ENCODE measurements at regions of chr3 and their contacts with region 1.

Region 1: DNA sequence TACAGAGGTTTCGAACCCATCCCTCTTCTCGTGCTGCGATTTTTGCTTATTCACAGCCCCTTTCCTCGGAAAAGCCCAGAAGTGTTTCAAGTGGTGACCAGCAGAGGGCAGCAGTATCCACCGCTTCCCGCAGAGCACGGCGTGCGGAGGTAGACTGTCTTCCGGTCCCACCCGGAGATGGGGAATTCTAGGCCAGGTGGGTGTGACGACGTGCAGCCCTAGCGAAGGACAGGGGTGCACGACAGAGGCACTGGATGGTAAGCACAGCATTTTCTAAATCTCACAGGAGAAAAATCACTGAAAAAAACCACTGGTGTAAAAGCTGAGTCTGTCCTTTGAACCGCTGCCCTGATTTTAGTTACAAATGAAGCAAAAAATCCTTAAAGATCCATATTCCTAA is 7.4 kb upstream of the PSMD6 start:
- DNase-seq: peak; percentile 77 to 87
- H3K4me3 ChIP-seq: no peak overlapping the region
- H3K4me1 ChIP-seq: no peaks in the 10 kb centered on the region
- H3K27me3 ChIP-seq: no peaks in the 10 kb centered on the region; the same call in 1 of the 2 replicates

Region 2: GRCh38 chr3:63674586-63674985 is 356.2 kb before region 1 on chr3:
- in situ Hi-C with region 1: no loop called
- DNase-seq: no peak
- H3K4me3 ChIP-seq: no peak overlapping the region
- H3K4me1 ChIP-seq: no peaks in the 10 kb centered on the region
- H3K27me3 ChIP-seq: no peaks in the 10 kb centered on the region

Region 3: GRCh38 chr3:64176461-64176996 is 145.8 kb after region 1 on chr3:
- in situ Hi-C with region 1: loop called (anchors 10 kb)
- DNase-seq: no peak
- H3K4me3 ChIP-seq: no peak overlapping the region
- H3K4me1 ChIP-seq: no peaks in the 10 kb centered on the region
- H3K27me3 ChIP-seq: peaks cover 9% of the 10 kb centered on the region

Region 4: GRCh38 chr3:64484289-64484992 is 453.7 kb after region 1 on chr3:
- in situ Hi-C with region 1: loop called (anchors 5 kb)
- DNase-seq: peak; percentile 81 to 89
- H3K4me3 ChIP-seq: no peak overlapping the region
- H3K4me1 ChIP-seq: peaks cover 4% of the 10 kb centered on the region; the same call in 1 of the 2 replicates
- H3K27me3 ChIP-seq: no peaks in the 10 kb centered on the region

Measured in HAP-1 (cell line).